MCF 10A (cell line): ENCODE measurements at regions of chr4 and their contacts with region 1.

Region 1: DNA sequence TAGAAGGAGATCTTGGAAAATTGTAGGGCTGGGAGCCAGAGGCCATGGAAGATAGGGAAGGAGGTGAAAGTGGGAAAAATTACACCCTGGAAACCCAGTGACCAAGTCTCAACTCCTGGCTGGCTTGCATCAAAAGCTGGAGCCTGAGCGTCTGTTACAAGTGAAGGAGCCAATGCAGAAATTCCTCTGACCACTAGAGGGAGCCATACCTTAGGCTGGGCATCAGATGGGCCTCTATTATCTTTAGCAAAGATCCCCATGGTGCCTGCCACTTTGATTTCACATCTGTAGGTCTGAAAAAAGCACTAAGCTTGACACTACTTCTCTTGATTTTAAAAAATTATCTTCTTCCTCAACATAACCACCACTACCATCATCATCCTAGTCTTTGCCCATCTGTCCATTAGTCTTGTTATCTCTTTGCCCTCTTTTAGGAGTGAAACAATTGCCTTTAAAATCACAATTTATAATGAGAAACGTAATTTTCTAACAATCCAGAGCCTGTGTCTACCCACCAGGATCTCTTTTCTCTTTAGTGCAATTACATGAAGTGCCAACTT is 62.9 kb downstream of the ANAPC4 start:
- DNase-seq: peak; percentile 77
- H3K4me3 Mint-ChIP-seq: no peak overlapping the region
- H3K27ac Mint-ChIP-seq: no peak overlapping the region
- H3K4me1 Mint-ChIP-seq: no peaks in the 10 kb centered on the region
- H3K27me3 Mint-ChIP-seq: no peaks in the 10 kb centered on the region
- CTCF ChIP-seq: peak; percentile 73

Region 2: DNA sequence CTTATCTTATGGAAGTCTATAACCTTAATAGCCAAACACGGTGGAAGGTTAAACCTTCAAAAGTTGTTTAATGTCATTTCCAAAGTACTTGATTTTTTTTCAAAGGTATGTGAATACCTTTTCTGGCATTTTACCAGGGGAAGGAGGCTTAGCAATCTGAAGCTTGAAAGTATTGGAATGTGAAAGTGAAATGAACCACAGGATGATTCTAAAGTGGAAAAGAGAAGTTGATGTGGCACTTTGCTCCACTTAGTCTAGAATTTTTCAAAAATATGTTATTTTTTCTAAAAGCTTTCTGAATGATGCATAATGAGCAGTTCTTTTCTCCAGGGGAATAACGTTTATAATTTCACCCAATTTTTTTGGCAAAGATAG is 186.9 kb before region 1 on chr4:
- CTCF ChIA-PET with region 1: no interaction called
- POLR2A ChIA-PET with region 1: no interaction called
- intact Hi-C with region 1: no loop called
- DNase-seq: peak; percentile 24
- H3K4me3 Mint-ChIP-seq: no peak overlapping the region
- H3K27ac Mint-ChIP-seq: no peak overlapping the region
- H3K4me1 Mint-ChIP-seq: peaks cover 16% of the 10 kb centered on the region
- H3K27me3 Mint-ChIP-seq: no peaks in the 10 kb centered on the region
- CTCF ChIP-seq: no peak

Region 3: GRCh38 chr4:25417014-25417413 is 23.0 kb before region 1 on chr4:
- CTCF ChIA-PET with region 1: interaction called, 23 read pairs
- POLR2A ChIA-PET with region 1: no interaction called
- intact Hi-C with region 1: no loop called
- DNase-seq: no peak
- H3K4me3 Mint-ChIP-seq: no peak overlapping the region
- H3K27ac Mint-ChIP-seq: no peak overlapping the region
- H3K4me1 Mint-ChIP-seq: no peaks in the 10 kb centered on the region
- H3K27me3 Mint-ChIP-seq: no peaks in the 10 kb centered on the region
- CTCF ChIP-seq: no peak

Region 4: DNA sequence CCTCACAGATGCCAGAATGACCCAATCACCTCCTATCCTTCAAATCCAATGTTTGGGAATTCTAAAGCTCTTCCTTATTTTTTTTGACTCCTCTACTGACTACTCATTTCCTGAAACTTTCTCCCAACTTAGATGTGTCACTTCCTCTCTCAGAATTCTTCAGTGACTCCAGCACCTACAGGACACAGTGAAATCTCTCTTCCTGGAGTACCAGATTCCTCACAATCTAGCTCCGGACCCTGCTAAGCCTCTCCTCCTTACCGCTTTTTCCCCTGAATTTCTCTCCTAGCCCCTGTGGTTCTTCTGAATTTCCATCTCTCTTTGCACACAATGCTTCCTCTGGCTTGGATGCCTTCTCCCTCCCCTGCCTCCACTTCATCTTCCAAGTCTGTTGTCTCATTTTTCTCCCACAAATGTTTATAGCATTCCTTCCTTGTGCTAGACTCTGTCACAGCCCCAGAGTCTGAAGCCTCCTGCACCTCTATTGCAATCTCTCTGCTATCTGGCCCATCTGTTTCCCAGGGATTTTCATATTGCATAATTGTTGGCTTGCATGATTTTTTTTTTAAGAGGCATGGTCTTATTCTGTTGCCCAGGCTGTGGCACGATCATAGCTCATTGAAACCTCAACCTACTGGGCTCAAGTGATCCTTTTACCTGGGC is 17.2 kb after region 1 on chr4:
- CTCF ChIA-PET with region 1: interaction called, 14 read pairs
- POLR2A ChIA-PET with region 1: no interaction called
- intact Hi-C with region 1: no loop called
- DNase-seq: peak; percentile 70
- H3K4me3 Mint-ChIP-seq: no peak overlapping the region
- H3K27ac Mint-ChIP-seq: no peak overlapping the region
- H3K4me1 Mint-ChIP-seq: peaks cover 15% of the 10 kb centered on the region
- H3K27me3 Mint-ChIP-seq: no peaks in the 10 kb centered on the region
- CTCF ChIP-seq: no peak

Region 5: DNA sequence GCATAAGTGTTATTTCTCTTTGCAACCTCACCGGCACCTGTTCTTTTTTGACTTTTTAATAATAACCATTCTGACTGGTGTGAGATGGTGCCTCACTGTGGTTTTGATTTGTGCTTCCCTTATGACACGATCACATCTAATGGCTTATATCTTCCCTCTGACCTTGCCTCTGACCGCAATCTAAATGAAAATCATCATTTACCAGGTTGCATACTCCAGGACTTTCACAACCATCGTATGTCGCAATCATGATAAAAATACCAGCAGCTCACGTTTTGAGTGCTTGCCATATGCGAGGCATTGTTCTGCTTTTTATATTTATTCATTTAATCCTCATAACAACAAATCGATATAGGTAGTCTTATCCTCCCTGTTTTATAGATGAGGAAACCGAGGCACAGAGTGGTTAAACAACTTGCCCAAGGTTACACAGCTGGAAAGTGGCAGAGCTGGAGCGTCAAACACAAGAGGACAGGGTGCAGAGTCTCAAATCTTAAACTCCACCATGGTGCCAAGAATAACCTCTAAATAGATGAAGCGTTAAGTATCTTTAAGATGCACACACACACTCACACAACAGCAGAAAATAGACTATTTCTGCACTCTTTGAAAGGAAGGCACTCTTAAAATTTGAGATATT is 320.6 kb after region 1 on chr4:
- CTCF ChIA-PET with region 1: interaction called, 309 read pairs
- POLR2A ChIA-PET with region 1: interaction called, 3 read pairs
- intact Hi-C with region 1: no loop called
- DNase-seq: peak; percentile 77
- H3K4me3 Mint-ChIP-seq: no peak overlapping the region
- H3K27ac Mint-ChIP-seq: no peak overlapping the region
- H3K4me1 Mint-ChIP-seq: peaks cover 7% of the 10 kb centered on the region
- H3K27me3 Mint-ChIP-seq: no peaks in the 10 kb centered on the region
- CTCF ChIP-seq: no peak

Region 6: DNA sequence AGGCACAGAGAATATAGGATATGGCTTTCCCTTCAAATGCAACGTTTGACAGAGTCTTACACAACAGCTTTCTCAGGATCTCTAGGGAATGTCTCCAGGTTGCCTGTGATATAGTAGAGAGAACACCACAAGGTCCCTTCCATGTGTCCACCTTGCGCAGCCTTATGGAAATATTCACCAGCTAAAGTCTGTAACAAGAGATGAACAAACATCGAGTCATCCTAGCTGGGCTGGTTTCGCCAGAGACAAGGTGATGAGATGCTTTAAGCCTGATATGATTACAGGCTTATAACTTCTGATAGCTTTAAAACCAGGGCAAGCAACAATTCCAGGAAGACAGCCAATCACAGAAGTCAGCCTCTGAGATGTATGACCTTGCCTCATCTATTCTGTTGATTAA is 339.0 kb after region 1 on chr4:
- CTCF ChIA-PET with region 1: interaction called, 309 read pairs
- POLR2A ChIA-PET with region 1: no interaction called
- intact Hi-C with region 1: no loop called
- DNase-seq: peak; percentile 39
- H3K4me3 Mint-ChIP-seq: no peak overlapping the region
- H3K27ac Mint-ChIP-seq: no peak overlapping the region
- H3K4me1 Mint-ChIP-seq: no peaks in the 10 kb centered on the region
- H3K27me3 Mint-ChIP-seq: no peaks in the 10 kb centered on the region
- CTCF ChIP-seq: no peak

Region 7: DNA sequence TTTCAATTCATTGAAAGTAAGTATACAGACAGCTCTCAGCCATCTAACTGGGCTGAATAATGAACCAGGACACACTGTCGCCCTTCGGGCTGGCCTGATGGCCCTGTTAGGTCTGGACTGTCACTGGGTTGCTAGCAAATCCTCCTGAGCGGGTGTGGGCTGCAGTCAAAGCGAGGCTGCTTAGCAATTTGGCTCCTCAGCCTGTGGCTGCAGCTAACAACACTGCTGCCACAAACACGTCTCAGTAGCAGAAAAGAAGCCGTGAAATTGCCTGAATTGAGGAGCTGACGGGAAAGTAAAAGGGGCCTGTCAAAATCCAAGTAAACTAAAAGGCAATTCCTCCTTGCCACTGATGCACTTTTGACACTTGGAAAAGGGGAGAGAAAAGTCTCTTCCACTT is 546.8 kb after region 1 on chr4:
- CTCF ChIA-PET with region 1: no interaction called
- POLR2A ChIA-PET with region 1: no interaction called
- intact Hi-C with region 1: loop called (anchors 5 kb)
- DNase-seq: no peak
- H3K4me3 Mint-ChIP-seq: no peak overlapping the region
- H3K27ac Mint-ChIP-seq: no peak overlapping the region
- H3K4me1 Mint-ChIP-seq: no peaks in the 10 kb centered on the region
- H3K27me3 Mint-ChIP-seq: no peaks in the 10 kb centered on the region
- CTCF ChIP-seq: no peak